AG04450 (cell line): ENCODE measurements at regions of chr17 and their contacts with region 1.

Region 1: GRCh38 chr17:7021993-7022778 is 664 bp upstream of the BCL6B start:
- DNase-seq: no peak
- H3K4me3 ChIP-seq: peak overlapping the region; percentile 36
- H3K27ac ChIP-seq: no peak overlapping the region
- H3K27me3 ChIP-seq: no peaks in the 10 kb centered on the region
- CTCF ChIP-seq: peak; percentile 87

Region 2: DNA sequence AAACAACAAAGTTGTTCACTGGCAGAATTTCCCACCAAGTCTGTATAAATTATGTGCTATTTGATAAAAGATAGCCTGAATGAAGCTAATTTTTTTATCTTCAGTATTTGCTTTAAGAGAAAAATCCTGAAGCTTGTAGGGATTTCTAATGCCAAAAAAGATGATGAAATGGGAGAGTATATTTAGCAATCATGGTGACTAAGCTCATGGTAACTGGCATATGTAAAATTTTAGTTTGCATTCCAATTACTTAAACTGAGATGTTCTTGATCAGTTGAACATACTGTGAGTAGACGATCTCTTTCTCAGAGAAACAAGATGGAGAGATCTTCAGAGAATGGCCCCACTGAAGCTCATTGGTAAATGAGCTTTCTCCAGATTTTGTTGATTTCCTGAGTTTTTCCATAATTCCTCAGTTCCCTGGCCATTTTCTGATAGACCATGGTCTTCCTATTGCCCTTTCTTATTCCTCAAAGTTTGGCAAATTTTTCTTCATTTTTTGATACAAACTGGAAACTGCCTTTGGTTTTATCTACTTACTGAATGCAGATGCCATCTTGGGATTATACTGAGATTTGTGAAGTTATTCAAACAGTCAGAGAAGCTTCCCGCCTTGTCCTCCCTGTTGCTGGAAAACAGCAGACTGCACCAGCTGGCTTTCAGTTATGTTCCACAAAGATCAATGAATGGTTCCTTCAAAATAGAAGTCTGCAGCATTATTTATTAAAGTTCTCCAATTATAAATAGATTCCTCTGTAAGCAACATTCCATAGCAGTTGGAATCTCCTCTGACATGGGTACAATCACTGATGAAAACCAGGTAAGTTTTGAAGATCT is 94.7 kb before region 1 on chr17:
- CTCF ChIA-PET with region 1: interaction called, 29 read pairs
- POLR2A ChIA-PET with region 1: no interaction called
- DNase-seq: peak; percentile 6
- H3K4me3 ChIP-seq: no peak overlapping the region
- H3K27ac ChIP-seq: no peak overlapping the region
- H3K27me3 ChIP-seq: peaks cover 4% of the 10 kb centered on the region
- CTCF ChIP-seq: no peak

Region 3: GRCh38 chr17:6981426-6981825 is 40.8 kb before region 1 on chr17:
- CTCF ChIA-PET with region 1: no interaction called
- POLR2A ChIA-PET with region 1: no interaction called
- DNase-seq: no peak
- H3K4me3 ChIP-seq: no peak overlapping the region
- H3K27ac ChIP-seq: no peak overlapping the region
- H3K27me3 ChIP-seq: no peaks in the 10 kb centered on the region
- CTCF ChIP-seq: no peak

Region 4: DNA sequence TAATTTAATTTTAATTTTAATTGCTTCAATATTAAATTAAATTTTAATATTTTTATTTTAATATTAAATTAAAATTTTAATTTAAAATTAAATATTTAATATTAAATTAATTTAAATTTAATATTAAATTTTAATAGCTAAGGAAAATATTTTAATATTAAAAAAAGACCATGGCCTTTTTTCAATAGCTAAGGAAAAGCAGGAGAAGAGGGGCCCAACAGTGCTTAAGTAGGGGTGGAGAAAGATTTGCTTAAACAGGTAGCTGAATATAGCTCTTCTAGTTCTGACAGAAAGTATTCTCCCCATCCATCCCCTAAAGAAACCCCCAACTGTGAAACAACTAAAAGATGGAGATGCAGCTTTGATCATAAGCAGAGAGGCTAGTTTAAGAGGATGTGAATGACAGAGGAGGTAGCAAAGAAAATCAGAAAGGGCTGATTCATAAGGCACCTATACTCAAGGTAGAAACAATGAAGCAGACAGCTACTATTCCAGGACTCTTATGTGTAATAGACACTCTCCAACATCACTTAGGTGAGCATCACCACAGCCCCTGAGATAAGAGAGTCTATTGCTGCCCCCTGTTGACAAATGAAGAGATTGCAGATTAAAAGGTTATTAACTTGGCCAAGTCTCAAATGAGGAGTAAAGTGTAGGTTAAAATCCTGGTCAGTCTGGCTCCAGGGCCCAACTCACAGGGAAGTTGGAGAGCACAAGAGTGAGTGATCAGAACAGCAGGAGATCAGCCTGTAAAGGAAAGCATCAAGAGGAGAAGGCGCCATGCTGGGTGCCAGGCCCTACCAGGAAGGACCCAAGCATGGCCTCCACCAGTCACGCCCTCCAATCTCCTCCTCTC is 17.6 kb before region 1 on chr17:
- CTCF ChIA-PET with region 1: interaction called, 28 read pairs
- POLR2A ChIA-PET with region 1: no interaction called
- DNase-seq: no peak
- H3K4me3 ChIP-seq: no peak overlapping the region
- H3K27ac ChIP-seq: no peak overlapping the region
- H3K27me3 ChIP-seq: no peaks in the 10 kb centered on the region
- CTCF ChIP-seq: peak; percentile 69

Region 5: GRCh38 chr17:7011942-7012254 is 10.3 kb before region 1 on chr17:
- CTCF ChIA-PET with region 1: interaction called, 18 read pairs
- POLR2A ChIA-PET with region 1: interaction called, 3 read pairs
- DNase-seq: no peak
- H3K4me3 ChIP-seq: peak overlapping the region; percentile 97
- H3K27ac ChIP-seq: peak overlapping the region; percentile 99
- H3K27me3 ChIP-seq: no peaks in the 10 kb centered on the region
- CTCF ChIP-seq: no peak

Region 6: GRCh38 chr17:7035591-7036368 is 13.6 kb after region 1 on chr17 and contains the start of gene SLC16A13:
- CTCF ChIA-PET with region 1: interaction called, 22 read pairs
- POLR2A ChIA-PET with region 1: no interaction called
- DNase-seq: peak; percentile 83
- H3K4me3 ChIP-seq: peak within 1 kb of the TSS; percentile 84
- H3K27ac ChIP-seq: peak within 1 kb of the TSS; percentile 75
- H3K27me3 ChIP-seq: no peaks in the 10 kb centered on the region
- CTCF ChIP-seq: 0 out of 2 replicates have a peak, but pooled peaks have one; percentile 7
- polyA plus RNA-seq, gene SLC16A13: 1.5 and 1.7 TPM in 2 replicates